ENCODE measurements at regions of chr15 and their contacts with region 1.

Region 1: GRCh38 chr15:84716036-84716799 is at the start of gene SEC11A:
- DNase-seq: peak; percentile 85
- ATAC-seq: peak; percentile 97
- H3K4me3 ChIP-seq: peak within 1 kb of the TSS; percentile 70
- H3K27ac ChIP-seq: peak within 1 kb of the TSS; percentile 87
- H3K4me1 ChIP-seq: peaks cover 20% of the 10 kb centered on the region
- H3K27me3 ChIP-seq: no peaks in the 10 kb centered on the region
- CTCF ChIP-seq: no peak
- EP300 ChIP-seq: no peak
- POLR2A ChIP-seq: peak; percentile 92
- RAD21 ChIP-seq: no peak
- polyA plus RNA-seq, gene SEC11A: 132 to 152 TPM

Region 2: GRCh38 chr15:84582583-84583157 is 133.5 kb before region 1 on chr15:
- CTCF ChIA-PET with region 1: no interaction called
- POLR2A ChIA-PET with region 1: no interaction called
- RAD21 ChIA-PET with region 1: no interaction called
- SMC1A ChIA-PET with region 1: no interaction called
- in situ Hi-C with region 1: no loop called
- intact Hi-C with region 1: no loop called
- DNase-seq: no peak
- ATAC-seq: no peak
- H3K4me3 ChIP-seq: no peak overlapping the region
- H3K27ac ChIP-seq: no peak overlapping the region
- H3K4me1 ChIP-seq: no peaks in the 10 kb centered on the region
- H3K27me3 ChIP-seq: no peaks in the 10 kb centered on the region; a peak in 1 of 4 replicates
- CTCF ChIP-seq: no peak
- EP300 ChIP-seq: no peak
- POLR2A ChIP-seq: no peak
- RAD21 ChIP-seq: no peak

Region 3: GRCh38 chr15:84658080-84658787 is 58.0 kb before region 1 on chr15 and contains the start of gene NMB:
- CTCF ChIA-PET with region 1: interaction called, 5 read pairs
- POLR2A ChIA-PET with region 1: interaction called, 3 read pairs
- RAD21 ChIA-PET with region 1: interaction called, 5 read pairs
- SMC1A ChIA-PET with region 1: interaction called, 4 read pairs
- in situ Hi-C with region 1: no loop called
- intact Hi-C with region 1: loop called (anchors 1 kb)
- DNase-seq: peak; percentile 33
- ATAC-seq: peak; percentile 81
- H3K4me3 ChIP-seq: peak within 1 kb of the TSS; percentile 49; the same call in 1 of the 2 replicates
- H3K27ac ChIP-seq: no peak within 1 kb of the TSS
- H3K4me1 ChIP-seq: peaks cover 19% of the 10 kb centered on the region
- H3K27me3 ChIP-seq: no peaks in the 10 kb centered on the region
- CTCF ChIP-seq: peak; percentile 56 to 66 (median 61)
- EP300 ChIP-seq: no peak
- POLR2A ChIP-seq: no peak
- RAD21 ChIP-seq: peak; percentile 29; the same call in 1 of the 2 replicates
- polyA plus RNA-seq, gene NMB: 0.32 to 0.91 TPM

Region 4: DNA sequence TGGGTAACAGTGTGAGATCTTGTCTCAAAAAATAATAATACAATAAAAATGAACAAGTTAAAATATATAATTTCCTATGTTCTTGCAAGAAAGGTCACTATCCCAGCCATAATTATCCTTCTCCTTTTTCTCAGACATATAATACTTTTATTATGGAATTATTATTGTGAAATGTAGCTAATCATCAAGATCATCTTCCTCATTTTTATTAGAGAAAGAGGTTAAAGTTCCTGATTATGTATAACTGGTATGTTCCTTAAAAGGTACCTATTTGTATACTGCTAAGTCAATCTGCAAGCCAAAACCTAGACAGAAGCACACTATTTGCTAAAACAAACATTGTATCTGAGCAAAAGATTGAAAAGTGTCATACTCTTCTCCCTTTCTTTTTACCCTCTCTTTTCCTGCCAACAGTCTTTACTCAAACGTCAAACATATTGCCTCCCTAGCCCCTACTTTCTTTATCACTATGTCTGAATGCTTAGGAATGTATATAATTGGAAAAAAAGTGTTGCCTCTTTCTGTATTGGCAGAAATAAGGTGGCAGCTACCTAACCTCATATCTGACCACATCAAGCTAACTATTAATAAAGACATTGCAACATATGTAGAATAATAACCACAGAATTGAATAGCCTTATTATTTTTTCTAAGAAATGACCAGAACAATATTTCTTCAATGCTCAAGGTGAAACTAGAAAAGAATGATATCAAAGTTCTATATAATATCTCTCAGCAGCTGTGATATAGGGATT is 18.8 kb before region 1 on chr15:
- CTCF ChIA-PET with region 1: interaction called, 3 read pairs
- POLR2A ChIA-PET with region 1: interaction called, 7 read pairs
- RAD21 ChIA-PET with region 1: interaction called, 8 read pairs
- SMC1A ChIA-PET with region 1: interaction called, 10 read pairs
- in situ Hi-C with region 1: no loop called
- intact Hi-C with region 1: no loop called
- DNase-seq: no peak
- ATAC-seq: peak; percentile 61
- H3K4me3 ChIP-seq: no peak overlapping the region
- H3K27ac ChIP-seq: no peak overlapping the region
- H3K4me1 ChIP-seq: no peaks in the 10 kb centered on the region; the same call in 1 of the 2 replicates
- H3K27me3 ChIP-seq: no peaks in the 10 kb centered on the region
- CTCF ChIP-seq: no peak
- EP300 ChIP-seq: no peak
- POLR2A ChIP-seq: no peak
- RAD21 ChIP-seq: no peak

Region 5: GRCh38 chr15:84734794-84735479 is 18.7 kb after region 1 on chr15:
- CTCF ChIA-PET with region 1: interaction called, 35 read pairs
- POLR2A ChIA-PET with region 1: interaction called, 27 read pairs
- RAD21 ChIA-PET with region 1: interaction called, 53 read pairs
- SMC1A ChIA-PET with region 1: interaction called, 60 read pairs
- in situ Hi-C with region 1: no loop called
- intact Hi-C with region 1: loop called (anchors 1 kb)
- DNase-seq: peak; percentile 94
- ATAC-seq: peak; percentile 82
- H3K4me3 ChIP-seq: peak overlapping the region; percentile 58
- H3K27ac ChIP-seq: peak overlapping the region; percentile 85
- H3K4me1 ChIP-seq: peaks cover 28% of the 10 kb centered on the region
- H3K27me3 ChIP-seq: no peaks in the 10 kb centered on the region
- CTCF ChIP-seq: no peak
- EP300 ChIP-seq: no peak
- POLR2A ChIP-seq: 0 out of 2 replicates have a peak, but pooled peaks have one; percentile 21
- RAD21 ChIP-seq: no peak

Region 6: GRCh38 chr15:84748274-84749110 is 32.3 kb after region 1 on chr15 and contains the start of gene ZNF592:
- CTCF ChIA-PET with region 1: interaction called, 3 read pairs
- POLR2A ChIA-PET with region 1: interaction called, 7 read pairs
- RAD21 ChIA-PET with region 1: interaction called, 9 read pairs
- SMC1A ChIA-PET with region 1: interaction called, 14 read pairs
- in situ Hi-C with region 1: no loop called
- intact Hi-C with region 1: loop called (anchors 1 kb)
- DNase-seq: no peak
- ATAC-seq: peak; percentile 51
- H3K4me3 ChIP-seq: peak within 1 kb of the TSS; percentile 84
- H3K27ac ChIP-seq: peak within 1 kb of the TSS; percentile 90
- H3K4me1 ChIP-seq: peaks cover 15% of the 10 kb centered on the region
- H3K27me3 ChIP-seq: no peaks in the 10 kb centered on the region
- CTCF ChIP-seq: peak in 2 of 3 experiments; percentile 25; a peak in 3 of 6 replicates
- EP300 ChIP-seq: no peak
- POLR2A ChIP-seq: peak; percentile 50
- RAD21 ChIP-seq: no peak
- polyA plus RNA-seq, gene ZNF592: 0.95 to 1.3 TPM

Measured in GM12878 (cell line).